ENCODE measurements at regions of chr20 and their contacts with region 1.

Region 1: DNA sequence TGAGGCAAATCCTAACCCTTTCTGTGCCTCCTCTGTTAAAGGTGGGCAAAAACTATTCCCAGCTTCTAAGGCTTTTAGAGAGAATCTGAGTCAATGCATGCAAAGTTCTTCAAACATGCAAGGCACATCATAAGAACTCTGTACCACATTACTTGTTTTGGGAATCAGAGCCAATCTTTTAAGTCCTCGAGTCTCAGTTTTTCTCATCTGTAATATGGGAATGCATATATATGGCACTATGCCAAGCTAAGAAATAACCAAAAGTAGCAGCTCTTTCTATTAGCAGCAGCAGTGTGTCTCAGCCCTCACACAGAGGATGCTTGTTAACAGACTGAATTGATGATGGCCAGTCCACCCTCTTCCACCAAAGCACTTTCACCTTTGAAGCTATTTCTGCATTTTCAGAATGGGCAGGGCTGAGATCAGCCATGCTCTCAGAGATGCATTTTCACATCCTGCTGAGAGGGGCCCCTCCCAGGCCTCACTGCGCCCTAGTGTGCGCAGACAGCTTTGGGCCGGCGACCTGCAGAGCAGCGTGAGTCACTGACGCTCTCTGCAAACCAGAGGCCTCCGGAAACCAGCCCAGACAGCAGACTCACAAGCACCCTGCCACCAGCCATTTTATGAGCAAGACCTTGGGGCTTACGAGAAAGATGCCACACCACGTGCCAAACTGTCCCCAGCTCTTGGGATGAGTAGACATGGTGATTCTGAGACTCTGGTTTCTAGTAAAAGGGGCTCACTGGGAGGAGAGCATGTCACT is 138.0 kb downstream of the NFATC2 start:
- DNase-seq: peak; percentile 79 to 94
- ATAC-seq: peak; percentile 73 to 91 (median 84)
- H3K4me3 ChIP-seq: no peak overlapping the region
- H3K4me3 Mint-ChIP-seq: peak overlapping the region; percentile 82
- H3K27ac ChIP-seq: peak overlapping the region; percentile 92
- H3K27ac Mint-ChIP-seq: peak overlapping the region; percentile 95 to 100
- H3K4me1 ChIP-seq: peaks cover 92% of the 10 kb centered on the region
- H3K4me1 Mint-ChIP-seq: peaks cover 74 to 86% of the 10 kb centered on the region in 2 donors
- H3K27me3 ChIP-seq: no peaks in the 10 kb centered on the region
- H3K27me3 Mint-ChIP-seq: no peaks in the 10 kb centered on the region
- CTCF ChIP-seq: no peak

Region 2: GRCh38 chr20:51417250-51418136 is 13.0 kb after region 1 on chr20:
- intact Hi-C with region 1: loop called (anchors 2 kb)
- DNase-seq: peak; percentile 55 to 74
- ATAC-seq: peak; percentile 60 to 61 (median 60)
- H3K4me3 ChIP-seq: no peak overlapping the region
- H3K4me3 Mint-ChIP-seq: peak overlapping the region; percentile 85
- H3K27ac ChIP-seq: peak overlapping the region; percentile 79
- H3K27ac Mint-ChIP-seq: peak overlapping the region; percentile 94 to 95
- H3K4me1 ChIP-seq: peaks cover 63% of the 10 kb centered on the region
- H3K4me1 Mint-ChIP-seq: peaks cover 69 to 76% of the 10 kb centered on the region in 2 donors
- H3K27me3 ChIP-seq: no peaks in the 10 kb centered on the region
- H3K27me3 Mint-ChIP-seq: no peaks in the 10 kb centered on the region
- CTCF ChIP-seq: no peak

Region 3: DNA sequence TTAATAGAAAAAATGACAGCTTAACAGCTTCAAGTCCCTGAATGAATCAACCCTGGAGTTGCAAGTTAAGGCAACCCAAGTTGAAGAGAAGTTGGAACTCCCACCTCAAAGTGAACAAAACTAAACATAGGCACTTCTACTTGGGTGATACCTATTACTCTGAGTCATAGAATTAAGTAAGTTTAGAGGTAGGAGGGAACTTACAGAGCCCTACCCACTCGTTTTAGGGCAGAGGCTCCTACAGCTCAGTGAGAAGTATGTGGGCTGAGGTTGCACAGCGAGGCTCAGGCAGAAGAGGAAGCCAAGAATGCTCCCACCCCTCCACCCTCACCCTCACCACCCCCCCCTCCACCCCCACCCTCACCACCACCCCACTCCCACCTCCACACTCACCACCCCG is 95.8 kb after region 1 on chr20:
- intact Hi-C with region 1: loop called (anchors 2 kb)
- DNase-seq: peak; percentile 49 to 86
- ATAC-seq: peak; percentile 79 to 90 (median 83)
- H3K4me3 ChIP-seq: no peak overlapping the region
- H3K4me3 Mint-ChIP-seq: peak overlapping the region; percentile 88
- H3K27ac ChIP-seq: peak overlapping the region; percentile 87
- H3K27ac Mint-ChIP-seq: peak overlapping the region; percentile 95 to 99
- H3K4me1 ChIP-seq: peaks cover 82% of the 10 kb centered on the region
- H3K4me1 Mint-ChIP-seq: peaks cover 92 to 93% of the 10 kb centered on the region in 2 donors
- H3K27me3 ChIP-seq: no peaks in the 10 kb centered on the region
- H3K27me3 Mint-ChIP-seq: no peaks in the 10 kb centered on the region
- CTCF ChIP-seq: no peak

Region 4: GRCh38 chr20:51541189-51542032 is 136.9 kb after region 1 on chr20:
- intact Hi-C with region 1: loop called (anchors 1 kb)
- DNase-seq: peak; percentile 81 to 94
- ATAC-seq: peak; percentile 70 to 86 (median 79)
- H3K4me3 ChIP-seq: peak overlapping the region; percentile 93
- H3K4me3 Mint-ChIP-seq: peak overlapping the region; percentile 99
- H3K27ac ChIP-seq: peak overlapping the region; percentile 91
- H3K27ac Mint-ChIP-seq: peak overlapping the region; percentile 95 to 100
- H3K4me1 ChIP-seq: peaks cover 50% of the 10 kb centered on the region
- H3K4me1 Mint-ChIP-seq: peaks cover 61 to 75% of the 10 kb centered on the region in 2 donors
- H3K27me3 ChIP-seq: no peaks in the 10 kb centered on the region
- H3K27me3 Mint-ChIP-seq: peaks cover 0 to 5% of the 10 kb centered on the region in 2 donors
- CTCF ChIP-seq: no peak

Region 5: GRCh38 chr20:52047811-52048764 is 643.6 kb after region 1 on chr20:
- intact Hi-C with region 1: loop called (anchors 5 kb)
- DNase-seq: peak; percentile 47 to 72
- ATAC-seq: peak; percentile 80 to 88 (median 84)
- H3K4me3 ChIP-seq: no peak overlapping the region
- H3K4me3 Mint-ChIP-seq: peak overlapping the region; percentile 87
- H3K27ac ChIP-seq: no peak overlapping the region
- H3K27ac Mint-ChIP-seq: peak overlapping the region; percentile 88 to 92
- H3K4me1 ChIP-seq: peaks cover 16% of the 10 kb centered on the region
- H3K4me1 Mint-ChIP-seq: peaks cover 20 to 28% of the 10 kb centered on the region in 2 donors
- H3K27me3 ChIP-seq: no peaks in the 10 kb centered on the region
- H3K27me3 Mint-ChIP-seq: no peaks in the 10 kb centered on the region
- CTCF ChIP-seq: no peak